Endothelial cell of umbilical vein (primary cell): ENCODE measurements at regions of chr1 and their contacts with region 1.

Region 1: GRCh38 chr1:36149237-36149972 is at the start of gene TRAPPC3:
- DNase-seq: peak; percentile 100
- H3K4me3 ChIP-seq: peak within 1 kb of the TSS; percentile 46 to 84 (median 71)
- H3K27ac ChIP-seq: peak within 1 kb of the TSS; percentile 98
- H3K4me1 ChIP-seq: peaks cover 31% of the 10 kb centered on the region
- H3K27me3 ChIP-seq: no peaks in the 10 kb centered on the region
- CTCF ChIP-seq: peak; percentile 99
- POLR2A ChIP-seq: peak; percentile 89
- total RNA-seq, gene TRAPPC3: 87.7 and 93.4 TPM in 2 replicates

Region 2: GRCh38 chr1:36125129-36125991 is 24.0 kb before region 1 on chr1 and contains the start of gene COL8A2:
- CTCF ChIA-PET with region 1: no interaction called
- POLR2A ChIA-PET with region 1: no interaction called
- dilution Hi-C with region 1: no loop called
- intact Hi-C with region 1: no loop called
- DNase-seq: no peak
- H3K4me3 ChIP-seq: peak within 1 kb of the TSS in 1 of 3 experiments; percentile 31
- H3K27ac ChIP-seq: no peak within 1 kb of the TSS
- H3K4me1 ChIP-seq: no peaks in the 10 kb centered on the region
- H3K27me3 ChIP-seq: peaks cover 5 to 9% of the 10 kb centered on the region in 2 experiments
- CTCF ChIP-seq: no peak
- POLR2A ChIP-seq: no peak
- total RNA-seq, gene COL8A2: 0.78 and 1.3 TPM in 2 replicates

Region 3: DNA sequence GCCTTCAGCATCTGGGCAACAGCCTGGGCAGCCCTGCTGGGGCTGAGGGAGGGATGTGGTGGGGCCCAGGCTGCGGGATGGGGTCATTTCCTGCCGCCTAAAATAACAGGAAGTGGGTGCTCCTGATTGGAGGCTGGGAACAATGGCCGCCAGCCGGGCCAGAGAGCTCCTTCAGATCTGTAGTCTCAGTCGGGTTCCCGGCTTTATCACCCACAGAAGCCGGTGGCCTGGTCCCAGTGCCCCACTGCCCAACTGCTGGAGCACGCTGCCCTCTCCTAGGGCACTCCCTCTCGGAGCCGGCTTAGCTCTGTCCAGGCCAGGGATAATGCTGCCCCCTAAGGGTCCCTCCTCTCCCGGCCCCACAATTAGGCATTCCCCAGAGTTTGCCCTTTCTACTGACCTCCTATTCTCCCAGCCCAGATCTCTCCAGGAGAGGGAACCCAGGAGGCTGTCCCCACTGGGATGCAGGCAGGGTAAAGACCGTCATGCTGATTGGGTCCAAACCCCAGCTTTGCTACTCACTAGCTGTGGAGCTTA is 11.6 kb after region 1 on chr1:
- CTCF ChIA-PET with region 1: interaction called, 62 read pairs
- POLR2A ChIA-PET with region 1: interaction called, 19 read pairs
- dilution Hi-C with region 1: no loop called
- intact Hi-C with region 1: loop called (anchors 1 kb)
- DNase-seq: peak; percentile 83
- H3K4me3 ChIP-seq: peak overlapping the region; percentile 26 to 66 (median 36)
- H3K27ac ChIP-seq: peak overlapping the region; percentile 97
- H3K4me1 ChIP-seq: peaks cover 51% of the 10 kb centered on the region
- H3K27me3 ChIP-seq: no peaks in the 10 kb centered on the region
- CTCF ChIP-seq: peak; percentile 29 to 36
- POLR2A ChIP-seq: peak; percentile 86

Region 4: GRCh38 chr1:36203554-36204346 is 54.3 kb after region 1 on chr1:
- CTCF ChIA-PET with region 1: no interaction called
- POLR2A ChIA-PET with region 1: no interaction called
- dilution Hi-C with region 1: no loop called
- intact Hi-C with region 1: no loop called
- DNase-seq: no peak
- H3K4me3 ChIP-seq: no peak overlapping the region
- H3K27ac ChIP-seq: no peak overlapping the region
- H3K4me1 ChIP-seq: no peaks in the 10 kb centered on the region
- H3K27me3 ChIP-seq: no peaks in the 10 kb centered on the region
- CTCF ChIP-seq: no peak
- POLR2A ChIP-seq: no peak

Region 5: GRCh38 chr1:36223993-36224536 is 74.7 kb after region 1 on chr1 and contains the start of gene THRAP3:
- CTCF ChIA-PET with region 1: interaction called, 16 read pairs
- POLR2A ChIA-PET with region 1: no interaction called
- dilution Hi-C with region 1: no loop called
- intact Hi-C with region 1: loop called (anchors 1 kb)
- DNase-seq: peak; percentile 100
- H3K4me3 ChIP-seq: peak within 1 kb of the TSS; percentile 74 to 99 (median 78)
- H3K27ac ChIP-seq: peak within 1 kb of the TSS; percentile 89
- H3K4me1 ChIP-seq: peaks cover 17% of the 10 kb centered on the region
- H3K27me3 ChIP-seq: no peaks in the 10 kb centered on the region
- CTCF ChIP-seq: no peak
- POLR2A ChIP-seq: peak; percentile 93
- total RNA-seq, gene THRAP3: 130 and 144 TPM in 2 replicates

Region 6: GRCh38 chr1:36323597-36324352 is 174.4 kb after region 1 on chr1 and contains the start of gene EVA1B:
- CTCF ChIA-PET with region 1: no interaction called
- POLR2A ChIA-PET with region 1: no interaction called
- dilution Hi-C with region 1: no loop called
- intact Hi-C with region 1: loop called (anchors 1 kb)
- DNase-seq: peak; percentile 90
- H3K4me3 ChIP-seq: peak within 1 kb of the TSS; percentile 61 to 85 (median 71)
- H3K27ac ChIP-seq: peak within 1 kb of the TSS; percentile 62
- H3K4me1 ChIP-seq: peaks cover 15% of the 10 kb centered on the region
- H3K27me3 ChIP-seq: no peaks in the 10 kb centered on the region
- CTCF ChIP-seq: no peak
- POLR2A ChIP-seq: no peak
- total RNA-seq, gene EVA1B: 63.2 and 64.7 TPM in 2 replicates

Region 7: GRCh38 chr1:36385410-36386257 is 236.2 kb after region 1 on chr1 and contains the start of gene STK40:
- CTCF ChIA-PET with region 1: no interaction called
- POLR2A ChIA-PET with region 1: no interaction called
- dilution Hi-C with region 1: no loop called
- intact Hi-C with region 1: loop called (anchors 1 kb)
- DNase-seq: peak; percentile 99
- H3K4me3 ChIP-seq: peak within 1 kb of the TSS; percentile 80 to 90 (median 83)
- H3K27ac ChIP-seq: peak within 1 kb of the TSS; percentile 97
- H3K4me1 ChIP-seq: peaks cover 24% of the 10 kb centered on the region
- H3K27me3 ChIP-seq: no peaks in the 10 kb centered on the region
- CTCF ChIP-seq: no peak
- POLR2A ChIP-seq: no peak
- total RNA-seq, gene STK40: 35.2 and 36.8 TPM in 2 replicates